ENCODE measurements at regions of chr11 and their contacts with region 1.

Region 1: DNA sequence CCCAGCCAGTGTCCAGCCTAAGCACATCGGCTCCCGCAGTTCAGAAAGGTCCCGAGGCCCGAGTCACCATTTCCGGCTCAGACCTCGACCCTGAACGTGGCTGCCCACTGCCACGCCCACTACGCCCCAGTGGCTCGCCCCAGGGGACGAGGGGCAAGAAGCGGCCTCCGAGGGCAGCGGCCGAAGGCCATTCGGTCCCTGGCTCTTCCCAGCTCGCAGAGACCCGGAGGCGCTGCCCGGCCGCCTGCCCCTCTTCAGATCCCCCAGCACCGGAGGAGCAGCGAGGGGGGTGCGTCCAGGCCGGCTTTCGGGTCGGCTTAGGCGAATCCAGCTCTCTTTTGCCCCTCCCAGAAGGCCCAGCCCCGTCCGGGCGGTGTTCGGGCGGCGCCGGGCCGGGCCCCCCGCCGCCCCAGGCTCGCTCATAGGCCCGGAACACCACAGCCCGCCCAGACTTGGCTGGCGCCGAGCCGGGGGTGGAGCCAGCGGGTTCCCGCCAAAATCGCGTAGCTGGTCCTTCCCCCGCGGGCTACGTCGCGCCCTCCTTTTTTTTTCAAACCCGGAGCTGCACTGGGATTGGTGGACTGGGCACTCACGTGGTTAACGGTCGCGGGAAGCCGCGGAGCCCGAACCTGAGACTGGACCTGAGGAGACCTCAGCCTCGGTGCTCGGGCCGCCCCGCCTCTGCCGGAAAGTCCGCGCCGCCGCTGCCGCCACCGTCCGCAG is at the start of gene WEE1:
- DNase-seq: peak; percentile 94 to 96 (median 95)
- H3K4me3 ChIP-seq: peak within 1 kb of the TSS; percentile 42 to 80
- H3K4me3 Mint-ChIP-seq: peak within 1 kb of the TSS; percentile 85 to 93 (median 89)
- H3K27ac ChIP-seq: peak within 1 kb of the TSS; percentile 86
- H3K27ac Mint-ChIP-seq: peak within 1 kb of the TSS; percentile 85 to 95 (median 92)
- H3K4me1 ChIP-seq: peaks cover 55% of the 10 kb centered on the region
- H3K4me1 Mint-ChIP-seq: peaks cover 24 to 56% (median 39%) of the 10 kb centered on the region in 4 donors
- H3K27me3 ChIP-seq: no peaks in the 10 kb centered on the region
- H3K27me3 Mint-ChIP-seq: no peaks in the 10 kb centered on the region
- total RNA-seq, gene WEE1: 11.1 to 11.7 TPM

Region 2: GRCh38 chr11:8682303-8683114 is 890.7 kb before region 1 on chr11 and contains the starts of genes RPL27A and TRIM66:
- CTCF ChIA-PET with region 1: no interaction called
- POLR2A ChIA-PET with region 1: interaction called, 7 read pairs
- intact Hi-C with region 1: loop called (anchors 1 kb)
- DNase-seq: peak; percentile 98 to 99 (median 98)
- H3K4me3 ChIP-seq: peak within 1 kb of the TSS; percentile 61 to 87
- H3K4me3 Mint-ChIP-seq: peak within 1 kb of the TSS; percentile 89 to 99 (median 96)
- H3K27ac ChIP-seq: peak within 1 kb of the TSS; percentile 96
- H3K27ac Mint-ChIP-seq: peak within 1 kb of the TSS; percentile 97 to 99 (median 98)
- H3K4me1 ChIP-seq: peaks cover 34% of the 10 kb centered on the region
- H3K4me1 Mint-ChIP-seq: peaks cover 28 to 72% (median 40%) of the 10 kb centered on the region in 4 donors
- H3K27me3 ChIP-seq: no peaks in the 10 kb centered on the region
- H3K27me3 Mint-ChIP-seq: no peaks in the 10 kb centered on the region
- total RNA-seq, gene RPL27A: 1,456 to 1,504 TPM
- total RNA-seq, gene TRIM66: 25.0 to 31.3 TPM

Region 3: GRCh38 chr11:9601037-9601875 is 28.0 kb after region 1 on chr11:
- CTCF ChIA-PET with region 1: interaction called, 5 read pairs
- POLR2A ChIA-PET with region 1: interaction called, 24 read pairs
- intact Hi-C with region 1: loop called (anchors 1 kb)
- DNase-seq: peak; percentile 45 to 80 (median 59)
- H3K4me3 ChIP-seq: peak overlapping the region; percentile 5 to 42
- H3K4me3 Mint-ChIP-seq: peak overlapping the region; percentile 64 to 88 (median 76)
- H3K27ac ChIP-seq: peak overlapping the region; percentile 62
- H3K27ac Mint-ChIP-seq: peak overlapping the region; percentile 53 to 95 (median 90)
- H3K4me1 ChIP-seq: peaks cover 19% of the 10 kb centered on the region
- H3K4me1 Mint-ChIP-seq: peaks cover 15 to 32% (median 20%) of the 10 kb centered on the region in 4 donors
- H3K27me3 ChIP-seq: no peaks in the 10 kb centered on the region
- H3K27me3 Mint-ChIP-seq: no peaks in the 10 kb centered on the region